ENCODE measurements at regions of chr14 and their contacts with region 1.

Region 1: DNA sequence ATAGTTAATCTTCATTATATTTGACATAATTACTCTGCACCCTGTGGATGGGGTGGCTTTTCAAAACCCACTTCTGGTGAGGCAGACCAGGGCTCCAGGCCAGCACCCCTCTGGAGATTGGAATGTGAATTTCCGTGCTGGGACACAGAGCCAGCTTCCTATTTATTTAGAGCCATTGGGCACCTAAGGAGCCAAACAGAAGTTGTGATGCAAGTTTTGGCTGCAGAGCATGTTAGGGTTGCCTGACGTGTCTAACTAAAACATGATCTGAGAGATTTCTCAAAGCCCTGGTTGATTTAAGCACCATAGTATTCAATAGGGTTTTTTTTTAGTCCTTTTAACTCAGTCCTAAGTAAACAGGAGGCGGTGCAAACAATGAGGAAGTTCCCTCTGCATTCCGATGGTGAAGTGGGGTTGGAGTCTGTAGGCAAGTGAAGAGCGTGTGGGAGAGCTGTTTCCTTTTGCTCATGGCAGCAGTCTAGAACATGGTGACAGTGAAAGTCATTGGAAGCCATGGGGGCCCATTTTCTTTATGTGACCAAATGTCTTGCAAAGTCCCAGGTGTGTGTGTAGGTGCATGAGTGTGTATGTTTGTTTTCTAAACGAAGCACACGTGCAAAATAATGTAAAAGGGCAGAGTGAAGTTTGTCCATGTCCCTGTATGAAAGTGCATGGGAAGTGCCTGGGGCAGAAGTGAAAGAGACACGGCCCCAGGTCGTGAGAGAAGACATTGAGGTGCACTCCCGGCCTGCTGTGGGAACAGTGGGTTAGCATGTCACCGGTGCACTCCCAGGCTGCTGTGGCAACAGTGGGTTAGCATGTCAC is 117.7 kb downstream of the PRKCH start:
- DNase-seq: peak; percentile 92
- H3K4me3 Mint-ChIP-seq: peak overlapping the region; percentile 68
- H3K27ac Mint-ChIP-seq: peak overlapping the region; percentile 86
- H3K4me1 Mint-ChIP-seq: peaks cover 17% of the 10 kb centered on the region
- H3K27me3 Mint-ChIP-seq: no peaks in the 10 kb centered on the region
- CTCF ChIP-seq: no peak

Region 2: GRCh38 chr14:61342486-61342885 is 96.6 kb before region 1 on chr14:
- CTCF ChIA-PET with region 1: no interaction called
- POLR2A ChIA-PET with region 1: no interaction called
- intact Hi-C with region 1: no loop called
- DNase-seq: no peak
- H3K4me3 Mint-ChIP-seq: no peak overlapping the region
- H3K27ac Mint-ChIP-seq: no peak overlapping the region
- H3K4me1 Mint-ChIP-seq: peaks cover 44% of the 10 kb centered on the region
- H3K27me3 Mint-ChIP-seq: no peaks in the 10 kb centered on the region
- CTCF ChIP-seq: no peak

Region 3: GRCh38 chr14:61426048-61426447 is 13.0 kb before region 1 on chr14:
- CTCF ChIA-PET with region 1: no interaction called
- POLR2A ChIA-PET with region 1: interaction called, 21 read pairs
- intact Hi-C with region 1: no loop called
- DNase-seq: peak; percentile 55
- H3K4me3 Mint-ChIP-seq: no peak overlapping the region
- H3K27ac Mint-ChIP-seq: peak overlapping the region; percentile 97
- H3K4me1 Mint-ChIP-seq: peaks cover 36% of the 10 kb centered on the region
- H3K27me3 Mint-ChIP-seq: no peaks in the 10 kb centered on the region
- CTCF ChIP-seq: no peak